Activated CD4-positive, alpha-beta memory T cell treated with anti-CD3 and anti-CD28 coated beads for 36 hours (primary cell): ENCODE measurements at regions of chr19 and their contacts with region 1.

Region 1: GRCh38 chr19:37172368-37173366 is at the start of gene ZNF585A:
- DNase-seq: peak; percentile 92
- H3K4me3 Mint-ChIP-seq: no peak within 1 kb of the TSS
- H3K27ac Mint-ChIP-seq: no peak within 1 kb of the TSS
- H3K4me1 Mint-ChIP-seq: no peaks in the 10 kb centered on the region
- H3K27me3 Mint-ChIP-seq: no peaks in the 10 kb centered on the region
- total RNA-seq, gene ZNF585A: 7.5 to 11.9 TPM

Region 2: GRCh38 chr19:36973021-36973843 is 199.4 kb before region 1 on chr19:
- CTCF ChIA-PET with region 1: no interaction called
- POLR2A ChIA-PET with region 1: no interaction called
- intact Hi-C with region 1: loop called (anchors 2 kb)
- DNase-seq: peak; percentile 91
- H3K4me3 Mint-ChIP-seq: peak overlapping the region; percentile 89
- H3K27ac Mint-ChIP-seq: peak overlapping the region; percentile 95
- H3K4me1 Mint-ChIP-seq: peaks cover 7% of the 10 kb centered on the region
- H3K27me3 Mint-ChIP-seq: no peaks in the 10 kb centered on the region

Region 3: GRCh38 chr19:37077934-37078725 is 94.5 kb before region 1 on chr19 and contains the start of gene ZNF420:
- CTCF ChIA-PET with region 1: no interaction called
- POLR2A ChIA-PET with region 1: no interaction called
- intact Hi-C with region 1: loop called (anchors 1 kb)
- DNase-seq: peak; percentile 93
- H3K4me3 Mint-ChIP-seq: peak within 1 kb of the TSS; percentile 94
- H3K27ac Mint-ChIP-seq: peak within 1 kb of the TSS; percentile 79
- H3K4me1 Mint-ChIP-seq: peaks cover 31% of the 10 kb centered on the region
- H3K27me3 Mint-ChIP-seq: no peaks in the 10 kb centered on the region
- total RNA-seq, gene ZNF420: 6.5 to 8.7 TPM

Region 4: DNA sequence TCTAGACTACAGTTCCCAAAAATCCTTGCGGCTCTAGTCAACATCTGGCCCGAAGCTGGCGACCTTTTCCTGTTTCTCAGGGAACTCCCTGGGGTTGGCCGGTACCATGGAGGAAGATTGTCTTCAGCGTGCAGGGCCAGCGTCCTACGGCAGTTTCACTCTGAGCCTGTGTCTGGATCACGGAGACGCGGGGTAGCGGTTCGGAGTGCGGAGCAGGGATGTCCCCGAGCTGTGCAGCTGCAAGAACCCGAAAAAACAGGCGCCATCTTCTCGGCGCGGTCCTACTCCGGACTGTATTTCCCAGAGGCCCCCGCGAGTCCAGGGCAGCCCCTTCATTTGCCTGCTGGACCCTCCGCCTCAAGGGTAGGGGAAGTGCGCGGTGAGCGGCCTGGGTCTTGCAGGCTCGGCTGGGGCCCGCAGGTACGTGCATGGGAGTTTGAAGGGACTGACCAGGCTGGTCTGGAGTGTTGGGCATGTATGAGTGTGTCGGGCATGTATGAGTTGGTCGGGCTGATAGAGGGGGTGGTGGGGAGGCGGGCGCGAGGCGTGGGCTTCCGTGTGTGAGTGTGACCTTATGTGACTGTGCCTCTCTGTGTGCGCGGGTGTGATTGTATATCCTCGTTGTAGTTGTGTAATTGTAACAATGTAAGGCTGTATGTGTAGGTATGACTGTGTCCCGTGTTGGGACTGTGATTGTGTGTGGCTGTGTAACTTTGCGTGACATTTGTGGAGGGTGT is 45.4 kb after region 1 on chr19 and contains the start of gene ZNF383:
- CTCF ChIA-PET with region 1: no interaction called
- POLR2A ChIA-PET with region 1: no interaction called
- intact Hi-C with region 1: loop called (anchors 1 kb)
- DNase-seq: peak; percentile 90
- H3K4me3 Mint-ChIP-seq: peak within 1 kb of the TSS; percentile 99
- H3K27ac Mint-ChIP-seq: peak within 1 kb of the TSS; percentile 99
- H3K4me1 Mint-ChIP-seq: peaks cover 19% of the 10 kb centered on the region
- H3K27me3 Mint-ChIP-seq: no peaks in the 10 kb centered on the region
- total RNA-seq, gene ZNF383: 7.7 TPM

Region 5: GRCh38 chr19:37506387-37507166 is 333.9 kb after region 1 on chr19 and contains the start of gene ZNF793:
- CTCF ChIA-PET with region 1: no interaction called
- POLR2A ChIA-PET with region 1: no interaction called
- intact Hi-C with region 1: loop called (anchors 2 kb)
- DNase-seq: peak; percentile 86
- H3K4me3 Mint-ChIP-seq: no peak within 1 kb of the TSS
- H3K27ac Mint-ChIP-seq: no peak within 1 kb of the TSS
- H3K4me1 Mint-ChIP-seq: no peaks in the 10 kb centered on the region
- H3K27me3 Mint-ChIP-seq: no peaks in the 10 kb centered on the region
- total RNA-seq, gene ZNF793: 2.4 to 3.4 TPM